ENCODE measurements at regions of chr14 and their contacts with region 1.

Region 1: GRCh38 chr14:100375963-100376735 is 53.0 kb downstream of the SLC25A47 start:
- DNase-seq: peak; percentile 94 to 95
- ATAC-seq: peak; percentile 93 to 97 (median 94)
- H3K4me3 ChIP-seq: peak within 1 kb of the TSS; percentile 33 to 95 (median 74)
- H3K27ac ChIP-seq: peak within 1 kb of the TSS; percentile 61 to 99 (median 96)
- H3K4me1 ChIP-seq: peaks cover 6 to 54% (median 23%) of the 10 kb centered on the region in 9 donors
- H3K27me3 ChIP-seq: no peaks in the 10 kb centered on the region
- CTCF ChIP-seq: no peak

Region 2: DNA sequence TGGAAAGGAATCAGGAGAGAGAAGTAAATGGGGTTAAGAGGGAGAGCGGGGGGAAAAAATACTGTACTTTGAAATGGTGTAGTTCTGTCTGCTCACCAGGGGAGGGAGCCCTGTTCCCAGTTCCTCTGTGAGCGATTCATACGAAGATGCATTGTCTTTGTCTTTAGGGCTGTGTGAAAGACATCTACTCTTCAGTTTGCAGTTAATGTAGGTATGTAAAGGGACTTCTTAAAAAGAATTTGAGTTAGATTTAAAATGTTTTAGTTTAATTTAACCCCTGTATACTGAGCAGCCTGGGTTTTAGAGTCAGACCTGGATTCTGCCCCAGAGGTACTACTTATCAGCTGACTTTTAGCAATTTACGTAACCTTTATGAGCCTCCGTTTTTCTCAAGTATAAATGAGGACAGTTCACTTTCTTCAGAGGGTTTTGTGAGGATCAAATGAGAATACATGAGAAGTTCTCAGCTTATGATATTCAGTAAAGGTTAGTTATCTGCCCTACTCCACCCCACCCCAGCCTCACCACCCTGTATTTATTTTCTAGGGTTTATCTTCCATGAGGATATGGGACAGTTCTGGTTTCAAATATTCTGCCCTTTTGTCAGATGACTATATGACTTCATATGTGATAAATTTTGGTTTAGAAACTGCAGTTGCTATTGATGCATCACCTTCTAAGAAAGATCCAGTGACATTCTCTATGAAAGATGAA is 393.5 kb before region 1 on chr14:
- intact Hi-C with region 1: loop called in 5 of 10 experiments (anchors 5 to 10 kb)
- DNase-seq: peak in 1 of 2 donors; percentile 50
- ATAC-seq: peak in 7 of 8 donors; percentile 76 to 92 (median 87)
- H3K4me3 ChIP-seq: no peak overlapping the region
- H3K27ac ChIP-seq: no peak overlapping the region
- H3K4me1 ChIP-seq: peaks cover 0 to 22% (median 10%) of the 10 kb centered on the region in 9 donors
- H3K27me3 ChIP-seq: no peaks in the 10 kb centered on the region
- CTCF ChIP-seq: peak; percentile 75 to 93 (median 89)

Region 3: DNA sequence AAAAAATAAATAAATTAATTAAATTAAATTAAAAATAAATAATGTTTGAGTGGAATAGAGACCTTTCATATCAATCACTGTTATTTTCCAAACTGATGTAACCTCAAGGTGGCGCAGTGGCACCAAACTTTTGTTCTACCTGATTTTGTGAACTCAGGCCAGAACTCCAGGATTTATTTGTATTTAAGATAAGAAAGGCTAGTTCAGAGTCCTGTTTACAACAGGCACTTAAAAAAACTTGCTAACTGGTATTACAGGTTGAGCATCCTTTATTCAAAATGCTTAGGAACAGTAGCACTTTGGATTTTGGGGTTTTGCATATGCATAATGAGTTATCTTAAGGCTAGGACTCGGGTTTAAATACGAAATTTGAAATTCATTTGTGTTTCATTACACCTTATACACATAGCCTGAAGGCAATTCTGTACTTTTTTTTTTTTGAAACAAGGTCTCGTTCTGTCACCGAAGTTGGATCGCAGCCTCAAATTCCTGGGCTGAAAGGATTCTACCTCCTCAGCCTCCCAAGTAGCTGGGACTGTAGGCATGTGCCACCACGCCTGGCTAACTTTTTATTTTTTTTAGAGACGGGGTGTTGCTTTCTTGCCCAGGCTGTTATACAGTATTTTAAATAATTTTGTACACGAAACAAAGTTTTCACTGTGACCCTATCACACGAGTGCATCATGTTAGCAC is 104.8 kb before region 1 on chr14:
- intact Hi-C with region 1: loop called in 1 of 10 experiments (anchors 2 kb)
- DNase-seq: no peak
- ATAC-seq: peak in 1 of 8 donors; percentile 31
- H3K4me3 ChIP-seq: no peak overlapping the region
- H3K27ac ChIP-seq: no peak overlapping the region
- H3K4me1 ChIP-seq: peaks cover 0 to 60% (median 36%) of the 10 kb centered on the region in 9 donors
- H3K27me3 ChIP-seq: no peaks in the 10 kb centered on the region
- CTCF ChIP-seq: peak in 7 of 9 donors; percentile 11 to 53 (median 43)

Region 4: GRCh38 chr14:100285021-100285912 is 90.9 kb before region 1 on chr14:
- intact Hi-C with region 1: loop called in 2 of 10 experiments (anchors 5 kb)
- DNase-seq: peak; percentile 46 to 82
- ATAC-seq: peak; percentile 80 to 96 (median 90)
- H3K4me3 ChIP-seq: peak overlapping the region; percentile 62 to 94 (median 88)
- H3K27ac ChIP-seq: peak overlapping the region; percentile 41 to 96 (median 90)
- H3K4me1 ChIP-seq: peaks cover 5 to 78% (median 33%) of the 10 kb centered on the region in 9 donors
- H3K27me3 ChIP-seq: no peaks in the 10 kb centered on the region
- CTCF ChIP-seq: peak; percentile 70 to 89 (median 82)

Region 5: GRCh38 chr14:101972268-101972774 is 1596.2 kb after region 1 on chr14:
- intact Hi-C with region 1: loop called in 1 of 10 experiments (anchors 10 kb)
- DNase-seq: peak; percentile 55 to 89
- ATAC-seq: peak; percentile 93 to 99 (median 98)
- H3K4me3 ChIP-seq: peak overlapping the region in 5 of 10 donors; percentile 0 to 10 (median 9)
- H3K27ac ChIP-seq: peak overlapping the region; percentile 3 to 86 (median 73)
- H3K4me1 ChIP-seq: peaks cover 9 to 79% (median 63%) of the 10 kb centered on the region in 9 donors
- H3K27me3 ChIP-seq: no peaks in the 10 kb centered on the region
- CTCF ChIP-seq: no peak